PC-9 (cell line): ENCODE measurements at regions of chr19 and their contacts with region 1.

Region 1: DNA sequence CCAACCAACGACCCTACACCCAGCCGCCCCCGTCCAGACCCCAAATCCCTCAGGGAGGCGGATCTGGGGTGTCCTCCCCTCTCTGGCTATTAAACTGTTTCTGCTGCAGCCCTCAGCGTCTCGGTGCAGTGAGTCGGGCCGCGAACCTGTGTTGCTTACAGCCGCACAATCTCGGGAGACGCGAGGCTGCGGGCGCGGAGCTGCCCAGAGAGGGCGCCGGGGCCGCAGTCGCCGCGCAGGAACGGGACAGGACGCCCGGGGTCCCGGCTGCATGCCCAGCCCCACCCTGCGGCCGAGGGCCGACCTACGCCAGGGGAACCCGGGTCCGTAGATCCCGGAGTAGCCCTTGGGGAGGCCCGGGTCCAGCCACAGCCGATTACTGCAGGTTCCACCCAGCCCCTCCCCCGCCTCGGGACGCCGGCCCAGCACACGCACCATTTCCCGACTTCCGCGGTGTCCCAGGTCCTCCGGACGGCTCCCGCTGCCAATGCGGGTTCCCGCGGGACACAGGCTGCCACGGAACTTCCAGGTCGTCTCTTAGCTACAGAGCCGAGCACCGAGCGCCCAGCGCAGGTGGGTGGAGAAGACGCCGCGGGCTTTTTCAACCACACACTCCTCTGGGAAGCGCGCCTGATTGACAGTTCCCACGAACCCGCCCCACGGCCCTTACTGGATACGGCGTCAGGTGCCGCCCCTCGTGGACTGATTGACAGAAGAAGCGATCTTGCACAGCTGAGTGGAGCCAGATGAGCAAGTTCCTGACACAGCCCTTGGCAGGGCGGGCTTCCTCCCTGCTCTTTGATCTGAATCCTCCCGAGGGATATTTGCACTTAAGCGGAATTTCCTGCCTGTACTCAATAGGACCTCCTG is at the start of gene ZNF799:
- DNase-seq: peak; percentile 96 to 97
- H3K4me3 ChIP-seq: peak within 1 kb of the TSS; percentile 93
- H3K27ac ChIP-seq: peak within 1 kb of the TSS; percentile 7; the same call in 1 of the 2 replicates
- H3K4me1 ChIP-seq: peaks cover 11% of the 10 kb centered on the region; the same call in 1 of the 2 replicates
- H3K27me3 ChIP-seq: no peaks in the 10 kb centered on the region
- CTCF ChIP-seq: no peak; the same call in 1 of the 2 replicates
- total RNA-seq, gene ZNF799: 2.5 and 2.9 TPM in 2 replicates

Region 2: GRCh38 chr19:12145348-12145747 is 255.5 kb before region 1 on chr19:
- CTCF ChIA-PET with region 1: no interaction called
- POLR2A ChIA-PET with region 1: interaction called, 21 read pairs
- intact Hi-C with region 1: no loop called
- DNase-seq: no peak
- H3K4me3 ChIP-seq: no peak overlapping the region
- H3K27ac ChIP-seq: no peak overlapping the region
- H3K4me1 ChIP-seq: peaks cover 8% of the 10 kb centered on the region; the same call in 1 of the 2 replicates
- H3K27me3 ChIP-seq: no peaks in the 10 kb centered on the region
- CTCF ChIP-seq: no peak

Region 3: DNA sequence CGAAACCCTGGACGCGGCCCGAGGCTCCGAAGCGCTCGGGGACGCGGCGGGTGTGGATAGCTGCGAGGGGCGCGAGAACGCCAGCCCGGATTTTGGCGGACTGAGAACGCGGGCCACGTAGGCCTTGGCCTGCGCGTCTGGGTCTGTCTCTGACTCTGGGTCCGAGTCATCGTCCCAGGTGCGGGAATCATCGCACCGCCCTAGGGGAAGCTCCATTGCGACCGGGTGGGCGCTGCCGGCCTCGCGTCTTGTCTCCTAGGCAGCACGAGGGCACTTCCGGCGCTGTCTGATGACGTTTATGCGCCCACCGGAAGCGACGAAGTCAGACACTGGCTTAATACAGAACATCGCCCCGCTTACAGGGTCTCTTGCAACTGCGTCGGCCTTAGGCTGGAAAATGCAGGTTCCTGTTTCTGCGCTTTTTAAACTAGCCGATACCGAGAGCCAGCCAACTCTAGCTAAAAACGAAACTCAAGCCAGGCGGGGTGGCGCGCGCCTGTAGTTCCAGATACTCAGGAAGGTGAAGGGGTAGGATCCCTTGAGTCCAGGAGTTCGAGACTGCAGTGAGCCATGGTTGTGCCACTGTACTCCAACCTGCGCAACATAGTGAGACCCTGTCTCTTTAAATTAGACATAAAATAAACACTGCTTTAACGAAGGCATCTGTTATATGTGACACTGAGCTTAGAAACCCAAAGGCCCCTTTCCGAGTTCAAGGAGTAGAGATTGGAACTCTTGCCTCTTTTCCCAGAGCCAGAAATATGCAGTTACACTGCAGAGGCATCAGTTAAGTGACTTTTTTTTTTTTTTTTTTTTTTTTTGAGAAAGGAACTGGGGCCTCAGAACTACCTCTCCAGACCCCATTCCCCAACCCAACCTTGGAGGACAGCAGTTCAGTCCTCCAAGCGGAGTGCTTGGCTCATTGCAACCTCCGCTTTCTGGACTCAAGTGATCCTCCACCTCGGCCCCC is 295.8 kb after region 1 on chr19 and contains the start of gene FBXW9:
- CTCF ChIA-PET with region 1: no interaction called
- POLR2A ChIA-PET with region 1: no interaction called
- intact Hi-C with region 1: no loop called
- DNase-seq: peak; percentile 90 to 91
- H3K4me3 ChIP-seq: peak within 1 kb of the TSS; percentile 72
- H3K27ac ChIP-seq: peak within 1 kb of the TSS; percentile 48
- H3K4me1 ChIP-seq: peaks cover 8% of the 10 kb centered on the region; the same call in 1 of the 2 replicates
- H3K27me3 ChIP-seq: no peaks in the 10 kb centered on the region
- CTCF ChIP-seq: no peak
- total RNA-seq, gene FBXW9: 21.0 and 21.9 TPM in 2 replicates